Breast epithelium (tissue), 4 donors: ENCODE measurements at regions of chr5 and their contacts with region 1.

Region 1: DNA sequence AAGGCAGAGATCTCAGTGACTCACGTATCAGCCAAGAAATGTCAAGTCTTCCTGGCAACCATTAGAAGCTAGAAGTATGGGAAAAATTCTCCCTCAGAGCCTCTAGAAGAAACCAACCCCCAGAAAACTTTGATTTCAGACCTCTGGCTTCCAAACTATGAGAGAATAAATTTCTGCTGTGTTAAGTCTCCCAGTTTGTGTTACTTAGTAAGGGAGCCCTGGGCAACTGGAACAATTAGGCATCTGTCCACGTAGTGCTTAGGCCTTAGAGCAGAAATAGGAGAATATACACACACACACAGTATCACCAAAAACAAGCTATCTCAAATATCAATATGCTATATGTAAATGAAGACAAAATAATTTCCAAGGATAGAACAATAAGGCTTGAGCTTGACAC is 894.8 kb upstream of the CDH10 start:
- DNase-seq: no peak
- H3K4me3 ChIP-seq: no peak overlapping the region
- H3K27ac ChIP-seq: no peak overlapping the region
- H3K4me1 ChIP-seq: no peaks in the 10 kb centered on the region
- H3K27me3 ChIP-seq: no peaks in the 10 kb centered on the region
- CTCF ChIP-seq: no peak
- POLR2A ChIP-seq: no peak

Region 2: DNA sequence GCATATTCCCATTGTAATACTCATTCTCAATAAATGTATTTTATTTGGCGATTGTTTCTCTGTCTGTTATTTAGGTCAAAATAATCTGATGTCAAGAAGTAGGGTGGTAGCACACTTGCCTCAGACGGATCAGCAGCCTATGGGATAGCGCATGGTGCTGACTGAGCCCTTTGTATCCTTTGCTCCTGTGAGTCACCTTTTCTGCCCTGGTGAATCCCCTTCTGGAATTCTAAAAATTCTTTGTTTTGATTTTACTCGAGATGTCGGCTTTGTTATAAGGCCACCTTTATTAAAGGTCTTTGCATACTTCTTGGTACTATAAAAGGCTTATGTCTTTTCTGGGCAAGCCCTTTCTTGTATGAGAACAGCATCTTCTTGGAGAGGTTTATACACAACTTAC is 311.0 kb after region 1 on chr5:
- intact Hi-C with region 1: loop called (anchors 5 kb)
- DNase-seq: no peak
- H3K4me3 ChIP-seq: peak overlapping the region in 1 of 3 donors; percentile 15
- H3K27ac ChIP-seq: peak overlapping the region in 1 of 2 donors; percentile 12
- H3K4me1 ChIP-seq: no peaks in the 10 kb centered on the region
- H3K27me3 ChIP-seq: no peaks in the 10 kb centered on the region
- CTCF ChIP-seq: no peak
- POLR2A ChIP-seq: no peak